Activated B cell treated with CpG ODN at 0.5 μM for 24 hours (primary cell): ENCODE measurements at regions of chr7 and their contacts with region 1.

Region 1: GRCh38 chr7:1503816-1504775 is at the start of gene INTS1:
- DNase-seq: peak; percentile 86
- ATAC-seq: peak; percentile 91
- H3K4me3 Mint-ChIP-seq: peak within 1 kb of the TSS; percentile 87
- H3K27ac Mint-ChIP-seq: peak within 1 kb of the TSS; percentile 71
- H3K4me1 Mint-ChIP-seq: peaks cover 55% of the 10 kb centered on the region
- H3K27me3 Mint-ChIP-seq: no peaks in the 10 kb centered on the region
- CTCF ChIP-seq: peak; percentile 55
- total RNA-seq, gene INTS1: 97.6 and 110 TPM in 2 replicates

Region 2: GRCh38 chr7:1459522-1459892 is 44.6 kb before region 1 on chr7:
- CTCF ChIA-PET with region 1: no interaction called
- POLR2A ChIA-PET with region 1: no interaction called
- intact Hi-C with region 1: loop called (anchors 1 kb)
- DNase-seq: peak; percentile 97
- ATAC-seq: peak; percentile 96
- H3K4me3 Mint-ChIP-seq: peak overlapping the region; percentile 69
- H3K27ac Mint-ChIP-seq: no peak overlapping the region
- H3K4me1 Mint-ChIP-seq: peaks cover 11% of the 10 kb centered on the region
- H3K27me3 Mint-ChIP-seq: no peaks in the 10 kb centered on the region
- CTCF ChIP-seq: no peak

Region 3: DNA sequence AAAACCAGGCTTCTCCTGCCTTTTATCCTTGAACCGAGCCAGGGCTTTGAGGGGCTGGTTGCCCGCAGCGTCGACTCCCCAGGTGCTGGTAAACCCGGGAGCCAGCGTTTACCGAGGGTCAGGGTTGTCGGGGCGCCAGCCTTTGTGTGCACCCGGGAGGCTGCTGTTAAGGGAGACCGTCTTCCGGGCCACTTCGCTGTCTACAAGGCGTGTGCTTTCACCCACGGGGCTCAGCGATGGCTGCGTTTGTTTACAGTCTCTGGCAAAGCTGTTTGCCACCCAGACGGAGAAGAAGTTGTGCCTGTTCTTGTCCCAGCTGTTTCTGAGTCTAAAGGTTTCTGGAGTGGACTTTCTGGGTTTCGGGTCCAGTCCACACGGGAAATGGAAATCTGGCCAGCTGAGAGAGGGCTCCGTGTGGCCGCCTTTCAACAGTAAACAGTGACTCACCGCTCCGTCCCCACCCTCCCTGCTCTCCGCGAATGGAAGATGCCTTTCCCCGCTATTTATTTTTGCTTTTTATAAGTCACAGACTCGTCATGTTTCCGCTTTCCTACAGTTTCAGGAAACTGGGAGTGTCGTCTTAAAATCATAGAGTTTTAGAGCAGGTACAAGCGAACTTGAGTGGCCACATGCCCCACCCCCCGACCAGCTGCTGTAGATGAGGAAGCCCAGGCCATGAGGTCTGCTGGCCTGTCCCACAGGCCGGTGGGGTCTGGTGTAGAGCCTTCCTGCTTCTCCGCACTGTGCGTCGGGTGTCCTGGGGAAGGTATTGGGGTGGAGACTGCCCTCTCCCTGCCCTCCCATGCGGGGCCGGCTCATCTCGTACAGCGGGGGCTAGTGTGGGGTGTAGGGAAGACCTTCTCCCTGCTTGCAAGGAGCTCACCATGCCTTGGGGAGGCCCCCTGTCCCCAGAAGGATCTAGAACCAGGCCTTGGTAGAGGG is 28.7 kb after region 1 on chr7:
- CTCF ChIA-PET with region 1: interaction called, 3 read pairs
- POLR2A ChIA-PET with region 1: interaction called, 31 read pairs
- intact Hi-C with region 1: loop called (anchors 1 kb)
- DNase-seq: no peak
- ATAC-seq: peak; percentile 26
- H3K4me3 Mint-ChIP-seq: peak overlapping the region; percentile 87
- H3K27ac Mint-ChIP-seq: peak overlapping the region; percentile 87
- H3K4me1 Mint-ChIP-seq: peaks cover 34% of the 10 kb centered on the region
- H3K27me3 Mint-ChIP-seq: no peaks in the 10 kb centered on the region
- CTCF ChIP-seq: no peak

Region 4: DNA sequence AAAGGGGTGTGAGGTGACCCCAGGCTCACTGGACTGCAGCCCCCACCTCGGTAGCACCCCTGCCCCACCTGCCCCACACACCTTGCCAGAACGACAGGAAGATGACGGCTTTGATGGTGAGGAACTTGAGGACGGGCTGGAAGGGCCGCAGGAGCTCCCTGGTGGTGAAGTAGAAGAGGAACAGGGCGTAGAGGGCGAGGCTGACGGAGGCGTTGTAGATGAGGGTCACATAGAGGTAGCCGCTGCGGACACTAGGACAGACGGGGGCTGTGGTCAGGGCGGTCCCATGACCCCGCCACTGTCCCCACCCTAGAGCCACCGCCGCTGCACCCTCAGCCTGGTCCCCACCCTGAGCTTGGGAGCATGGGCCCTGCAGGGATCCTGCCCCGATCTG is 44.3 kb after region 1 on chr7:
- CTCF ChIA-PET with region 1: no interaction called
- POLR2A ChIA-PET with region 1: no interaction called
- intact Hi-C with region 1: loop called (anchors 5 kb)
- DNase-seq: no peak
- ATAC-seq: peak; percentile 32
- H3K4me3 Mint-ChIP-seq: no peak overlapping the region
- H3K27ac Mint-ChIP-seq: no peak overlapping the region
- H3K4me1 Mint-ChIP-seq: peaks cover 3% of the 10 kb centered on the region
- H3K27me3 Mint-ChIP-seq: no peaks in the 10 kb centered on the region
- CTCF ChIP-seq: no peak

Region 5: DNA sequence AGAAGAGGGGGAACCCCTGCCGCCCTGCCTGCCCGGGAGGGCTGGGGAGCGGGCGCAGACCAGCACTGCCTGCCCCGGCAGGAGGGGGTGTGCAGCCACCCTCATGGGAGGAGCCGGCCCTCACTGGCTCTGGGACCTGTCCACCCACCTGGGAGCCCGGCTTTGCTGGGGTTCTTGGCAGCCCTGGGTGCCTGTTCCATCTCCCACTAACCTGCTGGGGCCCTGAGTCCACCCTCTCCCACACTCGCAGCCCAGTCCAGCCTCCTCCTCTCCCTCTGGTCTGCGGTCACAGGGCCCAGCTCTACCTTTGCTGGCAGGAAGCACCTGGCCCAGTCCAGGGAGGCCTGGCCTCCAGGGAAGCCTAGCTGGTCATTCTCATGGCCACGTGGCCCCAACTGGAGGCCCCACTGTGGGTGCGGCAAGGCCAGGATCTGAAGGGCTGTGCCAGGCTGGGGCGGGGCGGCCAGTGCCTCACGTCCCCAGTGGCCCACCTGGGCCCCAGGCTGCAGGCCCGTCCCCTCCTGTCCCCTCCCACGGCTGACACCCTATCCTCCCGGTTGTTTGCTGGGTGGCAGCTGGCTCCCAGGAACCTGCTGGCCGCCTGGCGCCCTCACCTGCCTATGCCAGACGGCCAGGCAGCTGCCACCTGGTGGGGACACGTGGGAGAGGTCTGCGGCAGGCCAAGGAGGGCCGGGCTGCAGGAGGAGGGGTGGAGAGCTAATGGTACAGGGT is 51.9 kb after region 1 on chr7 and contains the start of gene TMEM184A:
- CTCF ChIA-PET with region 1: no interaction called
- POLR2A ChIA-PET with region 1: no interaction called
- intact Hi-C with region 1: loop called (anchors 1 kb)
- DNase-seq: no peak
- ATAC-seq: peak; percentile 85
- H3K4me3 Mint-ChIP-seq: no peak within 1 kb of the TSS
- H3K27ac Mint-ChIP-seq: no peak within 1 kb of the TSS
- H3K4me1 Mint-ChIP-seq: peaks cover 3% of the 10 kb centered on the region
- H3K27me3 Mint-ChIP-seq: no peaks in the 10 kb centered on the region
- CTCF ChIP-seq: no peak
- total RNA-seq, gene TMEM184A: not detected in 2 replicates

Region 6: GRCh38 chr7:1569833-1570633 is 65.9 kb after region 1 on chr7 and contains the start of gene PSMG3:
- CTCF ChIA-PET with region 1: no interaction called
- POLR2A ChIA-PET with region 1: interaction called, 4 read pairs
- intact Hi-C with region 1: loop called (anchors 1 kb)
- DNase-seq: peak; percentile 91
- ATAC-seq: peak; percentile 90
- H3K4me3 Mint-ChIP-seq: peak within 1 kb of the TSS; percentile 86
- H3K27ac Mint-ChIP-seq: peak within 1 kb of the TSS; percentile 88
- H3K4me1 Mint-ChIP-seq: peaks cover 26% of the 10 kb centered on the region
- H3K27me3 Mint-ChIP-seq: no peaks in the 10 kb centered on the region
- CTCF ChIP-seq: no peak
- total RNA-seq, gene PSMG3: 29.5 and 30.5 TPM in 2 replicates

Region 7: GRCh38 chr7:1742555-1743303 is 238.6 kb after region 1 on chr7:
- CTCF ChIA-PET with region 1: no interaction called
- POLR2A ChIA-PET with region 1: no interaction called
- intact Hi-C with region 1: no loop called
- DNase-seq: no peak
- ATAC-seq: no peak
- H3K4me3 Mint-ChIP-seq: no peak overlapping the region
- H3K27ac Mint-ChIP-seq: no peak overlapping the region
- H3K4me1 Mint-ChIP-seq: peaks cover 14% of the 10 kb centered on the region
- H3K27me3 Mint-ChIP-seq: peaks cover 5% of the 10 kb centered on the region
- CTCF ChIP-seq: no peak

Region 8: GRCh38 chr7:2209146-2209960 is 705.3 kb after region 1 on chr7:
- CTCF ChIA-PET with region 1: no interaction called
- POLR2A ChIA-PET with region 1: no interaction called
- intact Hi-C with region 1: no loop called
- DNase-seq: peak; percentile 58
- ATAC-seq: peak; percentile 85
- H3K4me3 Mint-ChIP-seq: no peak overlapping the region
- H3K27ac Mint-ChIP-seq: peak overlapping the region; percentile 59
- H3K4me1 Mint-ChIP-seq: peaks cover 11% of the 10 kb centered on the region
- H3K27me3 Mint-ChIP-seq: no peaks in the 10 kb centered on the region
- CTCF ChIP-seq: no peak

Region 9: DNA sequence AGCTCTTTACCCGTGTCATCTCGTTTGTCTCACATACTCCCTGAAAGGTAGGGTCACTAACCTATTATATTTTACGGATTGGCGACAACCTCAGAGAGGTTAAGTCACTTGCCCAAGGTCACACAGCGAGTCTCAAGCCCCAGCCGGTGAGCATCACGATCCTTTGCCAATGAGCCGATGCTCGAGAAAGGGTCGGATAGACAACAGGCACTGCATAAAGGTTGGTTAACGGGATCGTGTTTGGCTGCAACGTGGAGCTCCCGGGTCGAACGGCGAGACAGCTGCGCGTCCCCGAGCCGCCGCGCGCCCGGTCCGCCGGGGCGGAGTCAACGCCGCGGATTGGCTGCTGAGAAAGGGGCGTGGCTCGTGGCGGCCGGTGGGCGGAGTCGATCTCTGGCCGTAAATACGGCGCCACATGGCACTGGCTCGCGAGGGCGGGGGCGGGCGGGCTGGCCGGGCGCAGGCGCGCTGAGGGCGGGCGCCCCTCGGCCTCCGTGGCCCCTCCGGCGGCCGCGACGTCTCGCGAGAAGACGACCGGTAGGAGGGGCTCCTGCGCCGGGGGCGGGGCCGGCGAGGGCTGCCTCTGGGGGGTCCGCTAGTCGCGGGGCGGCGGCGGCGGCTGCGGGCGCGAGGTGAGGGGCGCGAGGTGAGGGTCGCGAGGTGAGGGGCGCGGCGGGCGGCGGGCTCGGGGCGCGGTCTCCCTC is 899.1 kb after region 1 on chr7 and contains the start of gene CHST12:
- CTCF ChIA-PET with region 1: no interaction called
- POLR2A ChIA-PET with region 1: no interaction called
- intact Hi-C with region 1: loop called (anchors 2 kb)
- DNase-seq: peak; percentile 91
- ATAC-seq: peak; percentile 77
- H3K4me3 Mint-ChIP-seq: peak within 1 kb of the TSS; percentile 85
- H3K27ac Mint-ChIP-seq: peak within 1 kb of the TSS; percentile 93
- H3K4me1 Mint-ChIP-seq: peaks cover 47% of the 10 kb centered on the region
- H3K27me3 Mint-ChIP-seq: no peaks in the 10 kb centered on the region
- CTCF ChIP-seq: no peak
- total RNA-seq, gene CHST12: 10.3 and 14.4 TPM in 2 replicates